Dorsolateral prefrontal cortex (tissue), 120 donors: ENCODE measurements at regions of chr9 and their contacts with region 1.

Region 1: DNA sequence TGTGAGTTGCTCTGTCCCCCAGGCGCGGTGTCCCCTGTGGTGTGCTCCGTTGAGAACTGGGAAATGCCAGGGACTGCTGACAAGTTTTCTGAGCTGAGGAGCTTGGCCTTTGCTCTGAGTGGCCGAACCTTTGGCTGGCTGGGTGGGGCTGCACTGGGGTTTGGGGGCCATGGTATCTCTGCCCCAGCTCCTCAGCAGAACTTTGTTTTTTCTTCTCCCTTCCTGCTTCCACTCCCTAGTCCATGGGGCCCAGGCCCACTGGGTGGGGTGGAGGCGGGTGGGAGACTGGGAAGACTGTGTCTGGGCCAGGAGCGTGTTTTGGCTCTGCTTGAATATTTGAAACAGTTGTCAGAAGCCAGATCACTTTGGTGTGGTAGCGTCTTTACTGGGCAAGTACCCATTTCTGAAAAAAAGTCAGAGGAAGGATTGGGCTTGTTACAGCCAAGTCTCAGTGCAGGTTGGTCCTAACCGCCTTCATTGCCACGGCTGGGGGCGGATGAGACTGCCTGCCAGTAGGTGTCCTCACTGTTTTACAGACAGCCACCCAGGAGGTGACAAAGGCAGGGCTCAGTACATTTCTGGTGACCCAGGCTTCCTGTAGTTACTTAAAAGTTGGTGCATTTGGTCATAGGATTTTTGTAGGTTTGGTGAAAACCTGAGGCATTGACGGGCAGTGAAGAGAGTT is 92.7 kb downstream of the DAB2IP start:
- DNase-seq: peak in 9 of 10 donors; percentile 60 to 76 (median 68)
- H3K4me3 ChIP-seq: peak overlapping the region in 55 of 59 donors; percentile 12 to 68 (median 45)
- H3K27ac ChIP-seq: peak overlapping the region in 57 of 59 donors; percentile 51 to 91 (median 83)
- H3K27me3 ChIP-seq: no peaks in the 10 kb centered on the region
- CTCF ChIP-seq: peak; percentile 15 to 81 (median 65)

Region 2: DNA sequence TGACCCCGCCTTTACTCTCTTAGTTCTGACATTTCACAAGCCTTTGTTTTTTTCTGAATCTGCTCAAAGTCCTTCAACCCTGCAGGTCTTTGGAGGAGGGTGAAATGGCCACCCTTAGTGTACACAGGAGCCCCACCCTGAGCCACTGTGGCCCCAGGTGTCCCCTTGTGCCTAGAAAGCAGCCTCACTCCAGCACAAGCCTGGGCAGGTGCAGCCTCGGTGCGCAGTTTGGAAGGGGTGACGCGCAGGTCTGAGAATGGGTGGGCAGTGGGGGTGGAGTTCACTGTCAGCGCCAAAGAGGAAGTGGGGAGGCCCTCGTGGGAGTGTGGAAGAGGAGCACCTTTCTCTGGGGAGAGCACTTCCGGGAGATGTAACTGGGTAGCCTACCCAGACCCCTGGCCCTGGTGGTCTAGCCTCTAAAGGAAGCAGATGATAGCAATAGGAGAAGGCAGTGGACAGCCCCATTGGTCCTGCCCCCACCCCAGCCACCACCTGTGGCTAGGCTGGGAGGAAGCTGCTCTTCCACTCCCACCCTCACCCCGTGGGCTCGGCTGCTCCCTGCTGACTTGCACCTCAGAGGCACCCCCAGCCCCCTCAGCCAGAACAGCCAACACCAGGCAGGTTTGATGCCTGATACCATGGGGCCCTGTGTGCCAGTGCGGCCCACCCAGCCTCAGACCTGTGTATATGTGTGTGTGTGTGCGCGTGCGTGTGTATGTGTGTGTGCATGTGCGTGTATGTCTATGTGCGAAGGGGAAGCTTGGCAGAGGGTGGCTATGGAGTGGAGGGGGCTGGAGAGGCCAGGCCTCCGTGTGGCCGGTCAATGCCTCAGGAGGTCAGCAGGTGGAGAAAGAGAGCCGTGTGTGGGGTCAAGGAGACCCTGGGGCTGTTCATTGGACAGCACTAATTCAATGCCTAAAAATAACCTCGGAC is 109.5 kb before region 1 on chr9:
- intact Hi-C with region 1: loop called in 1 of 2 experiments (anchors 5 kb)
- DNase-seq: peak in 2 of 10 donors; percentile 38 to 55
- H3K4me3 ChIP-seq: no peak overlapping the region
- H3K27ac ChIP-seq: peak overlapping the region in 20 of 59 donors; percentile 8 to 97 (median 90)
- H3K27me3 ChIP-seq: no peaks in the 10 kb centered on the region
- CTCF ChIP-seq: peak in 54 of 56 donors; percentile 33 to 77 (median 62)

Region 3: DNA sequence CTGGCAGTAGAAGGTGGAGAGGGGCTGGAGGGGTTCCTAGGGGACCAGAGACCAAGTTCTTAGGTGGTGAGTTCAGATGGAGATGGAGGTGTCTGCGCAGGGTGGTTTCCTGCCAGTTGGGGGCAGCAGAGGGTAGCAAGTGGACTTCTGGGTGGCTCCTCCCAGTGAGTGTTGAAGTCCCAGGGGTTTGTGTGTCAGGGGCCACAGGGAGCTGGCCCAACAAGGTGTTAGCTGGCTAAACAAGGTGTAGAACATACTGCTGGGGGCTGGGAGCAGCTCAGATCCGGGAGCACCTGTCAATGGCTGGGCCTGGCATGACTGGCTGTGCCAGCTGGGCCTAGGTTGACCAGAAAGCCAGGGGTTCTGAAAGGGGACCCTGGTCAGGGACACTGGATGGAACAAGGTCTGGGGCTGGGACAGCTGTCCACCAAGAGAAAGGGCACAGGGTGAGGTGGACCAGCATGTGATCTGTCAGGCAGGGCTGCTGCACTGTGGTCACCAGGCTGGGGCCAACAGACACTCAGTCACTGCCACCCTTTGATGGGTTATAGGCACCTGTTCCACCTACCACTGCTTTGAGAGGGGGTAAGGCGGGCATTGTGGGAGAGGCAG is 57.1 kb before region 1 on chr9:
- intact Hi-C with region 1: loop called in 1 of 2 experiments (anchors 5 kb)
- DNase-seq: peak; percentile 72 to 85 (median 78)
- H3K4me3 ChIP-seq: no peak overlapping the region
- H3K27ac ChIP-seq: peak overlapping the region in 13 of 59 donors; percentile 4 to 71 (median 32)
- H3K27me3 ChIP-seq: no peaks in the 10 kb centered on the region
- CTCF ChIP-seq: peak; percentile 39 to 96 (median 86)

Region 4: GRCh38 chr9:121861501-121862180 is 117.5 kb after region 1 on chr9:
- intact Hi-C with region 1: loop called in 1 of 2 experiments (anchors 5 kb)
- DNase-seq: peak in 6 of 10 donors; percentile 42 to 64 (median 57)
- H3K4me3 ChIP-seq: no peak overlapping the region
- H3K27ac ChIP-seq: peak overlapping the region in 22 of 59 donors; percentile 4 to 71 (median 44)
- H3K27me3 ChIP-seq: no peaks in the 10 kb centered on the region
- CTCF ChIP-seq: peak in 53 of 56 donors; percentile 21 to 73 (median 53)

Region 5: DNA sequence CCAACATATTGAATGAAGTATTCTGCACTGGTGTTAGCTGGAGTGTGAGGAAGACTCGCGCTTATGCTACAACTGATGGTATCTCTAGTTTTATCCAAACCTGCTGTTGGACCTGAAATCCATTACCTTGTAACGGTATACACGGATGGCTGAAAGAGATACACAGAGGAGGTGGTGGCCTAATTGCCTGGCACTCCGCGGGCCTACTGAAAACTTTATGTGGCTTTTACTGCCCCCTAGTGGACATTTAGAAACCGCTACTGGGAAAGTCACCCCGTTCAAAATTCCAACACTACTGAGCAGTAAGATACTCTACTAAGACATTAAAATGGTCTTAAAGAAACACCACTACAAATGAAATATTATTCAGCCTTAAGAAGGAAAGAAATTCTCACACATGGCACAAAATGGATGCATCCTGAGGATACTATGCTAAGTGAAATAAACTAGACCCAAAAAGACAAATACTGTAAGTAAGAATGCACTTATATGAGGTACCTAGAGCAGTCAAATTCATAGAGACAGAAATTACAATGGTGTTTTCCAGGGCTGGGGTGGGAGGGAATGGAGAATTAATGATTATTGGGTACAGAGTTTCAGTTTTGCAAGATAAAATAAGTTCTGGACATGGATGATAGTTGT is 248.5 kb after region 1 on chr9:
- intact Hi-C with region 1: loop called (anchors 2 to 10 kb)
- DNase-seq: peak in 7 of 10 donors; percentile 53 to 77 (median 70)
- H3K4me3 ChIP-seq: no peak overlapping the region
- H3K27ac ChIP-seq: peak overlapping the region in 13 of 59 donors; percentile 2 to 58 (median 26)
- H3K27me3 ChIP-seq: no peaks in the 10 kb centered on the region
- CTCF ChIP-seq: peak; percentile 79 to 97 (median 91)

Region 6: GRCh38 chr9:122092611-122093506 is 348.7 kb after region 1 on chr9 and contains the start of gene TTLL11:
- intact Hi-C with region 1: loop called (anchors 10 kb)
- DNase-seq: peak; percentile 97 to 99 (median 98)
- H3K4me3 ChIP-seq: peak within 1 kb of the TSS; percentile 51 to 99 (median 94)
- H3K27ac ChIP-seq: peak within 1 kb of the TSS in 56 of 59 donors; percentile 32 to 98 (median 88)
- H3K27me3 ChIP-seq: no peaks in the 10 kb centered on the region
- CTCF ChIP-seq: peak in 43 of 56 donors; percentile 7 to 61 (median 34)
- total RNA-seq, gene TTLL11: 39.9 to 86.0 (median 58.2) TPM